Sciatic nerve (tissue), 2 donors: ENCODE measurements at regions of chr3 and their contacts with region 1.

Region 1: GRCh38 chr3:64685800-64686445 is 1.9 kb downstream of the ADAMTS9 start:
- DNase-seq: peak; percentile 97
- ATAC-seq: peak; percentile 96

Region 2: GRCh38 chr3:64642327-64643151 is 43.4 kb before region 1 on chr3:
- intact Hi-C with region 1: no loop called
- DNase-seq: no peak
- ATAC-seq: peak; percentile 15

Region 3: DNA sequence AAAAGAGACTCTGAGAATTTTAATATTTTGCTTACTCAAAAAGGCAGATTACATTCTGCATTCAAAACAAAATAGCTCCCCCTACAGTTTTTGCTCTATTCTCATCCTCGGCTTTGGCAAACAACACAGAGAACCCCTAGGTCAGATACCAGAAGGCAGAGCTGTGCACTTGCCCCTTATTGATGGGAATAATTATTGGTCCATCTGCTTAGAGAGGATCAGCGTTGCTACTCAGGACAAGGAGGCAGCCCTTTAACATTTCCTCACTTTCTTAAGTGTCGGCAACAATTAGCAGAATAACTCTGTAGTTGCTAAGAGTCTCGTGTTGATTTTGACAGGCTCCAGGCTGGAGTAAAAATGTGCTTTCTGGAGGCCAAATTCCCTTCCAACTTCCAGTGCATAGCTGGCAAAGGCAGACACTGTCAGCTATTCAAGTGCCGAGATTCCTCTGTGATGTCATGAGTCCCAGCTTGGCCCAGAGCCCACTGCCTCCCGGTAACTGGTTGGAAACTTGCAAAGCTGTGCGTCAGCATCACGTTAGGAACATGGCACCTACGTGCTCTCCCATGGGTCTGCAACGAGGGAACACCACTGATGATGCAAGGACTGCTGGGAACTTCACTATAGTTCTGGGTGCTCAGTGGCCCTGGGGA is 484.6 kb after region 1 on chr3:
- intact Hi-C with region 1: loop called (anchors 2 kb)
- DNase-seq: peak; percentile 92
- ATAC-seq: peak; percentile 92

Region 4: DNA sequence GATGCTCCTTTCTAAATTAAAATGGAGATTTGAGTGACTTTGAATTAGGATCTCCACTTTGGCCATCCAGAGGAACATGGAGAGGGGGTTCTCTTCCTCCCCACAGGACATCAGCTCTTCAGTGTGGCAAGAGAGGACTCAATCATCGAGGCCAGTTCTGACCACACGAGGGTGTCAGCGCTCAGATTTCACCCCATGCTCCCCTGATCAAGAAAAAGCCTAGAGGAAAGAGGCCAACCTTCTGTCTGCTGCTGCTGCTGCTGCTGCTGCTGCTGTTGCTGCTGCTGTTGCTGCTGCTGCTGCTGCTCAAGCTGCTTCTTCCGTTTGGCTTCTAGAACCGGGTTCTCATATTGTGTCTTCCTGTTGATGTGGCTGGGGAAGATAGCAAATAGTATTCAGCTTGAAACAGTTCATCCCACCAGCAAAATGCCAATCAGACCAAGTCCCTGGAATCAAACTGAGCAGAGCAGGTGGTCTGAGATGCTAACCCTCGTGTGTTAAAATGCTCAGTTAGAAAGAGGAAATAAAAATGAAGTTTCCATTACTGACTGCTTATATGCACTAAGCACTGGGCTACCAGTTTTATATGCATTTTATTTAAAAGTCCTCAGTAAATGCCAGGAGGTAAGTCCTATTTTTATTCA is 753.8 kb after region 1 on chr3:
- intact Hi-C with region 1: loop called (anchors 10 kb)
- DNase-seq: peak; percentile 69
- ATAC-seq: peak; percentile 85